ENCODE measurements at regions of chr11 and their contacts with region 1.

Region 1: GRCh38 chr11:68930991-68931855 is 27.5 kb downstream of the IGHMBP2 start:
- DNase-seq: no peak
- H3K4me3 ChIP-seq: no peak overlapping the region
- H3K27ac ChIP-seq: no peak overlapping the region
- H3K4me1 ChIP-seq: no peaks in the 10 kb centered on the region
- H3K27me3 ChIP-seq: no peaks in the 10 kb centered on the region
- CTCF ChIP-seq: no peak
- POLR2A ChIP-seq: no peak

Region 2: DNA sequence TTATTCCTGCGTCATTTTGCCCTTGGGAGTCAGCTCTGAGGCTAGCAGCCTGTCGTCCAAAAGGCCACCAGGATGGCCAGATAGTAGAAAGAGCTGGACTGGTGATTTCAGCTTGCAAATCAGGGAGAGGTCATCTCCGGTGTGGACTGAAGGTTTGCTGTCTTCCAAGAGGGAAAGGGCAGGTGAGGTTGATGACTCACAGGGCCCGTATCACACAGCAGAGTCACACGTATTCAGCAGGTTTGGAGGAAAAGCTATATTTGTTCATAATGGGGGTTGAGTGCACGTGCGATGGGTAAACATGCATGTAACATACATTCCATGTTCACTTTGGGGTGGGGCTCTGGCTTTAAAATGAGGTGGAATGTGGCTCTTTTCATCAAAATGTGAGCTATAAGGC is 53.2 kb before region 1 on chr11:
- intact Hi-C with region 1: no loop called
- DNase-seq: no peak
- H3K4me3 ChIP-seq: no peak overlapping the region
- H3K27ac ChIP-seq: no peak overlapping the region
- H3K4me1 ChIP-seq: no peaks in the 10 kb centered on the region
- H3K27me3 ChIP-seq: no peaks in the 10 kb centered on the region
- CTCF ChIP-seq: no peak
- POLR2A ChIP-seq: no peak

Region 3: DNA sequence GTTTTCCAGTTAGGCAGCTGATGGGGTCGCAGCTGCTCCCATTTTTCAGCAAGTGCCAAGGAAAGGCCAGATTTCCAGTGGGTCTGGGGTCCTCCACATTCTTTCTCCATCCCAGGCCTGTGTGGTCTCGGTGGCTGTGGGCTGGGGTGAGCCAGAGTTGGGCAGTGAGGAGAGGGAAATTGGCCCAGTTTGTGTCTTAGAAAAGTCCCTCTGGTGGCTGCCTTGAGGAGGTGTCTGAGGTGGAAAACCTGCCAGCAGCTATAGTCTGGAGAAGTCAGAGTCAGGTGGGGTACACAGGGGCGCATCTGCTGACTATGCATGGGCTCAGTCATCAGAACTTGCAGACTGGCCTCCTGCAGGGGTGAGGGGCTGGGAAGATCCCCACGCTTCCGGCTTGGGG is 19.0 kb after region 1 on chr11:
- intact Hi-C with region 1: loop called (anchors 1 kb)
- DNase-seq: no peak
- H3K4me3 ChIP-seq: no peak overlapping the region
- H3K27ac ChIP-seq: no peak overlapping the region
- H3K4me1 ChIP-seq: no peaks in the 10 kb centered on the region
- H3K27me3 ChIP-seq: no peaks in the 10 kb centered on the region
- CTCF ChIP-seq: no peak
- POLR2A ChIP-seq: no peak